ENCODE measurements at regions of chr3 and their contacts with region 1.

Region 1: DNA sequence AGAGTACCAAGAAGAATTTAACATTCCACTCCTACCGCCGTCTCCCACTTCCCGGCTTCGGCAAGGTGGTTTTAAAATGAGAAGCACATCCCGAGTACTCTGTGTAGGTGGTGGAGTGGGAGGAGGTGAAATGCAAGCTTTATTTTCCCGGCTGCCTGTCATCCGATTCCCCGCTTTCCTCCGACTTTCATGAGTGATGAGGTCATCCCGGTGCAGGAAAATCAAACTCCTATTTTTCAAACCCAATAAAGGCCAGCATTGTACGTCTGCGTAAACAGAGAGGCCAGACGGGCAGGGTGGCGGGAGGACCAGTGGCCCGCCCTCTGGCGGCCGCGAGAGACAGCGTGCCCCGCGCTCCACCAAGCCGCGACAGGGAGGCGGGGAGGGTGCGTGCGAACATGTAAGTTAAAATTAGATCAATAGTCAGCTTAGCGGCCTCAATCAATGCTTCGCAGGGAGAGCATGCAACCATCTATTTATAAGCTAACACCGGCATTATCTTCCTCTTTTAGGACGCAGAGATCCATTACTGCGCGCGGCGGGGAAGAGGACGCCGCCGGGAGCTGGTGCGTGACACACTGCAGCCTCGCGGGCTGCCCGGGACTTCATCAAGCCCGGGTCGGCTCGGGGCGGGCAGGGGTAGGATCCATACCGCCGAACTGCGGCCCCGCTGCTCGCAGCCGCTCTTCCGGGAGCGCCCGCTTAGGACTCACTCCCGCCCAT is 163.3 kb downstream of the CD47 start:
- DNase-seq: peak; percentile 53 to 62 (median 58)
- H3K4me3 ChIP-seq: peak overlapping the region; percentile 54 to 65
- H3K4me3 Mint-ChIP-seq: peak overlapping the region; percentile 86 to 92 (median 92)
- H3K27ac ChIP-seq: no peak overlapping the region
- H3K27ac Mint-ChIP-seq: peak overlapping the region in 5 of 7 donors; percentile 24 to 80 (median 67)
- H3K4me1 ChIP-seq: peaks cover 7% of the 10 kb centered on the region
- H3K4me1 Mint-ChIP-seq: peaks cover 7 to 15% (median 9%) of the 10 kb centered on the region in 4 donors
- H3K27me3 ChIP-seq: no peaks in the 10 kb centered on the region
- H3K27me3 Mint-ChIP-seq: peaks cover 0 to 4% of the 10 kb centered on the region in 2 donors

Region 2: GRCh38 chr3:107235928-107236315 is 691.6 kb before region 1 on chr3:
- CTCF ChIA-PET with region 1: interaction called, 30 read pairs
- POLR2A ChIA-PET with region 1: interaction called, 4 read pairs
- intact Hi-C with region 1: loop called (anchors 1 kb)
- DNase-seq: peak; percentile 65 to 74 (median 68)
- H3K4me3 ChIP-seq: peak overlapping the region in 1 of 2 donors; percentile 32
- H3K4me3 Mint-ChIP-seq: peak overlapping the region; percentile 6 to 73 (median 49)
- H3K27ac ChIP-seq: no peak overlapping the region
- H3K27ac Mint-ChIP-seq: no peak overlapping the region
- H3K4me1 ChIP-seq: peaks cover 7% of the 10 kb centered on the region
- H3K4me1 Mint-ChIP-seq: peaks cover 9 to 13% (median 11%) of the 10 kb centered on the region in 4 donors
- H3K27me3 ChIP-seq: no peaks in the 10 kb centered on the region
- H3K27me3 Mint-ChIP-seq: peaks cover 4 to 5% of the 10 kb centered on the region in 2 donors

Region 3: DNA sequence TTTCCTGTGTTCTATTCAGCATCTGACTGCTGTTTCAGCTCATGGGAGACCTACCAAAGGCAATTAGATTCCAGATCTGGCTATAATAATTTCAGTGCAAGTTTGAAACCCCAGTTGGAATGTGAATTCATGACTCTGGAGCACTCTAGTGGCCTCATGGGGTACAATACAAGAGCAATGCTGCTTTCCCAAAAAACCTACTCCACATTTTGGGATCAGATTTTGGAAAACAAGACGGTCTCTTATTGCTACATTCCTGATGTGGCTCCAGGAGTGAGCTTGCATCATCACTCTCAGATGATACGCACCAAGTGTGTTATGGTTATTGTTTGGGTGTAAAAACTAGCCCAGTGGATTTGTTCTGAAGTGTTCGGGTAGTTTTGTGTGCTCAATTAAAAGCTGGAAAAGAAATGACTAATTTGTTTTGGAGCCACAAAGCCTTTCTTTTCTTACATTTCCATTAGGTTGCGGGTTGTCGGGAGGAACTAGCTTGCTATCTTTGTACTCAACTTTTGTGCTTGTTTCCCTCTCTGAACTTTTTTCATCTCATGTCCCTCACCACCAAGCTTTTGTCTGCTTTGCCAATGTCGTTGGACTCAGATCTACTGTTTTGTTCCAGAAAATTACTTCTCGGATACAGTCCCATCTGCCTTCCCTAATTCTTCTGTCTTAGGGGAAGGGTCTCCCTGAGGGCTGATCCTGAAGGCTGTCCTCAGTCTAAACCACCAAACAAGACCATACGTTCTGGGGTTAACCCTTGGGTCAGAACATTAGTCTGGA is 132.7 kb before region 1 on chr3:
- CTCF ChIA-PET with region 1: no interaction called
- POLR2A ChIA-PET with region 1: no interaction called
- intact Hi-C with region 1: no loop called
- DNase-seq: no peak
- H3K4me3 ChIP-seq: no peak overlapping the region
- H3K4me3 Mint-ChIP-seq: no peak overlapping the region
- H3K27ac ChIP-seq: no peak overlapping the region
- H3K27ac Mint-ChIP-seq: peak overlapping the region in 2 of 7 donors; percentile 2 to 54
- H3K4me1 ChIP-seq: peaks cover 8% of the 10 kb centered on the region
- H3K4me1 Mint-ChIP-seq: peaks cover 13 to 29% (median 18%) of the 10 kb centered on the region in 4 donors
- H3K27me3 ChIP-seq: no peaks in the 10 kb centered on the region
- H3K27me3 Mint-ChIP-seq: no peaks in the 10 kb centered on the region

Region 4: GRCh38 chr3:107897471-107898061 is 30.0 kb before region 1 on chr3:
- CTCF ChIA-PET with region 1: interaction called, 14 read pairs
- POLR2A ChIA-PET with region 1: no interaction called
- intact Hi-C with region 1: no loop called
- DNase-seq: no peak
- H3K4me3 ChIP-seq: no peak overlapping the region
- H3K4me3 Mint-ChIP-seq: no peak overlapping the region
- H3K27ac ChIP-seq: no peak overlapping the region
- H3K27ac Mint-ChIP-seq: no peak overlapping the region
- H3K4me1 ChIP-seq: no peaks in the 10 kb centered on the region
- H3K4me1 Mint-ChIP-seq: no peaks in the 10 kb centered on the region
- H3K27me3 ChIP-seq: peaks cover 12% of the 10 kb centered on the region
- H3K27me3 Mint-ChIP-seq: peaks cover 21 to 38% of the 10 kb centered on the region in 2 donors

Region 5: GRCh38 chr3:107938143-107938542 is 10.6 kb after region 1 on chr3:
- CTCF ChIA-PET with region 1: interaction called, 35 read pairs
- POLR2A ChIA-PET with region 1: no interaction called
- intact Hi-C with region 1: no loop called
- DNase-seq: peak in 3 of 5 donors; percentile 10 to 23 (median 15)
- H3K4me3 ChIP-seq: no peak overlapping the region
- H3K4me3 Mint-ChIP-seq: no peak overlapping the region
- H3K27ac ChIP-seq: no peak overlapping the region
- H3K27ac Mint-ChIP-seq: no peak overlapping the region
- H3K4me1 ChIP-seq: peaks cover 15% of the 10 kb centered on the region
- H3K4me1 Mint-ChIP-seq: peaks cover 11 to 21% (median 16%) of the 10 kb centered on the region in 4 donors
- H3K27me3 ChIP-seq: no peaks in the 10 kb centered on the region
- H3K27me3 Mint-ChIP-seq: peaks cover 1 to 11% of the 10 kb centered on the region in 2 donors

Region 6: DNA sequence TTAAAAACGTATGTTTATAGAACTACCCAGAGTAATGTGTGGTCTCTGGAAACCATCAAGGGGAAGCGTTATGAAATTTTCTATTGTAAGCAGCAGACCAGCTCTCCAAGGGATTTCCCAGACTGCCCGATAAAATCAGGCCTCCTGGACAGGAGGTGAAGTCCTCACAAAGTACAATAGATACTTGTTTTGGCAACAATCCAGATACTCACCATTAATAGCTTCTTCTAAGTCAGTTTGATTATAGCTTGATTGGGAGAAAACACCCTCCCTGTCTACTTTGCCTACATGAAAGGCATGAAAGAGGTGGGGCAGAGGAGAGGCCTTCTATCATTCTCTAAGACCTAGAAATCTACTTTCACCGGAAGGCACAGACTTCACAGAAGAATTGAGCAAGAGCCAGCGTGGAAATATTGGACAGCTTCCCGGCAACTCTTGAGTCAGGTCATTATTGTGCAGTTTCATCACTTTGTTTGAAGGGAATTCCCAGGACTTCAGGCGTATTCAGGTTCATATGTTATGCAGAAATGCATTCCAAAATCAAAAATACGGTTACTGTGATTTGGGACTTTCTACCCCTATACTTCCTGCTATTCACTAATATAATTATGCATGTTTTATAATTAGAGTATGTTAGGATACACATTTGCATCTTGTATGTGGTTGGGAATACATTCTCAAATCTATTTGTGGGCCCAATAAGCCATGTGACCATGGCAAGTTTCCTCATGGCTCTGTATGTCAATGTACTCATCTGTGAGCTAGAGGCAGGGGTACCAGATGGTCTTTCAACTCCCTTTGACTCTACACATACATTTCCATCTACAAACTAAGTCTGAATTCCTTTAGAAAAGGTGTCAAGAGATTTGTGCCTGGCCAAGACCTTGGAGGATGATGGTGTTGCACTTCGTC is 59.8 kb after region 1 on chr3:
- CTCF ChIA-PET with region 1: interaction called, 17 read pairs
- POLR2A ChIA-PET with region 1: interaction called, 4 read pairs
- intact Hi-C with region 1: no loop called
- DNase-seq: no peak
- H3K4me3 ChIP-seq: no peak overlapping the region
- H3K4me3 Mint-ChIP-seq: peak overlapping the region in 3 of 8 donors; percentile 10 to 29 (median 16)
- H3K27ac ChIP-seq: no peak overlapping the region
- H3K27ac Mint-ChIP-seq: peak overlapping the region in 5 of 7 donors; percentile 17 to 67 (median 60)
- H3K4me1 ChIP-seq: peaks cover 35% of the 10 kb centered on the region
- H3K4me1 Mint-ChIP-seq: peaks cover 28 to 50% (median 39%) of the 10 kb centered on the region in 4 donors
- H3K27me3 ChIP-seq: no peaks in the 10 kb centered on the region
- H3K27me3 Mint-ChIP-seq: no peaks in the 10 kb centered on the region

Region 7: DNA sequence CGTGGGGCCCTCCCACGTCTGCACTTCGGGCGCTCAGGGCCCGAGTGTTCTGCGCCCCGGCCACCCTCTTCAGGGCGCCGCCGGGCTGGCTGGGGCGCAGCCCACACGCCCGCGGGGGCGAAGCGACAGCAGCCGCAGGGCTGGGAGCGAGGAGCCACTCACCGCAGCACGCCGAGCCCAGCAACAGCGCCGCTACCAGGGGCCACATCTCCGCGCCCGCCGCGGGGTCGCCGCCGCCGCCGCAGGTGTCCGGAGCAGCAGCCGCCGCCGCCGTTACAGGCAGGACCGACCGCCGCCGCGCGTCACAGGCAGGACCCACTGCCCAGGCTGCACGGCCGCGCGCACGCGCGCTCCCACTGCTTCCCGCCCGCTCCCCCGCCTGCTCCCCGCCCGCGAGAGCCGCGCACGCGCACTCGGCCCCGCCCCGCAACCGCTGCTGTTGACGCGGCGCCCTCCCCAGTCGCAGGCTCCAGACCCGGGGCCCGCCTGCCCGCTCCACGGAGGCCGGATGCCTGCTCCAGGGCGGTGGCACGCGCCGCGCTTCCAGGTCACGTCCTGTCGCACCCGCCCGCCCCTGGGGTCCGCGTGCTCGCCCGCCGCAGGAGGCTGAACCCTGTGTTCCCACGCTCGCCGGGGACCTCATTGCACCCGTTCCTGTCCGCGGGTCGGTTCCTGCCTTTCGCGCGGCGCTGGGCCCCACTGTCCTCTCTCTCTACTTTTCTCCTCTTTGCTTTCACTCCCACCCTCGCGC is 163.4 kb after region 1 on chr3 and contains the start of gene CD47:
- CTCF ChIA-PET with region 1: interaction called, 4 read pairs
- POLR2A ChIA-PET with region 1: interaction called, 5 read pairs
- intact Hi-C with region 1: loop called (anchors 5 kb)
- DNase-seq: peak; percentile 96 to 98 (median 98)
- H3K4me3 ChIP-seq: peak within 1 kb of the TSS; percentile 71 to 82
- H3K4me3 Mint-ChIP-seq: peak within 1 kb of the TSS; percentile 94 to 100 (median 98)
- H3K27ac ChIP-seq: peak within 1 kb of the TSS; percentile 96
- H3K27ac Mint-ChIP-seq: peak within 1 kb of the TSS; percentile 98 to 100 (median 99)
- H3K4me1 ChIP-seq: peaks cover 52% of the 10 kb centered on the region
- H3K4me1 Mint-ChIP-seq: peaks cover 33 to 51% (median 38%) of the 10 kb centered on the region in 4 donors
- H3K27me3 ChIP-seq: no peaks in the 10 kb centered on the region
- H3K27me3 Mint-ChIP-seq: peaks cover 0 to 1% of the 10 kb centered on the region in 2 donors
- total RNA-seq, gene CD47: 224 to 226 TPM

Measured in CD4-positive, alpha-beta memory T cell (primary cell).